Posterior cingulate gyrus (tissue), 11 donors: ENCODE measurements at regions of chr9 and their contacts with region 1.

Region 1: GRCh38 chr9:136807281-136808074 is at the start of gene RABL6:
- DNase-seq: peak; percentile 49 to 94 (median 66)

Region 2: GRCh38 chr9:136762915-136763648 is 44.4 kb before region 1 on chr9:
- intact Hi-C with region 1: no loop called
- DNase-seq: peak in 4 of 10 donors; percentile 2 to 75 (median 60)

Region 3: GRCh38 chr9:136840140-136840687 is 32.7 kb after region 1 on chr9:
- intact Hi-C with region 1: loop called (anchors 5 kb)
- DNase-seq: no peak

Region 4: GRCh38 chr9:136885950-136886578 is 78.6 kb after region 1 on chr9 and contains the start of gene TRAF2:
- intact Hi-C with region 1: no loop called
- DNase-seq: peak; percentile 97 to 100 (median 98)